Activated T-helper 2 cell treated with anti-CD3 and anti-CD28 coated beads, Interferon-gamma antibody, Interleukin-2, Interleukin-4, amounts not matched to agents 10 μg/mL and 5 μg/mL and 100 μg/mL, durations not matched to agents 14 hours and 24 hours and 36 hours (primary cell): ENCODE measurements at regions of chr5 and their contacts with region 1.

Region 1: GRCh38 chr5:91383027-91383955 is at the start of gene ARRDC3:
- DNase-seq: peak; percentile 96
- H3K4me3 Mint-ChIP-seq: peak within 1 kb of the TSS; percentile 98
- H3K27ac Mint-ChIP-seq: peak within 1 kb of the TSS; percentile 100
- H3K4me1 Mint-ChIP-seq: peaks cover 26% of the 10 kb centered on the region
- H3K27me3 Mint-ChIP-seq: no peaks in the 10 kb centered on the region
- total RNA-seq, gene ARRDC3: 17.6 TPM in 2 replicates

Region 2: DNA sequence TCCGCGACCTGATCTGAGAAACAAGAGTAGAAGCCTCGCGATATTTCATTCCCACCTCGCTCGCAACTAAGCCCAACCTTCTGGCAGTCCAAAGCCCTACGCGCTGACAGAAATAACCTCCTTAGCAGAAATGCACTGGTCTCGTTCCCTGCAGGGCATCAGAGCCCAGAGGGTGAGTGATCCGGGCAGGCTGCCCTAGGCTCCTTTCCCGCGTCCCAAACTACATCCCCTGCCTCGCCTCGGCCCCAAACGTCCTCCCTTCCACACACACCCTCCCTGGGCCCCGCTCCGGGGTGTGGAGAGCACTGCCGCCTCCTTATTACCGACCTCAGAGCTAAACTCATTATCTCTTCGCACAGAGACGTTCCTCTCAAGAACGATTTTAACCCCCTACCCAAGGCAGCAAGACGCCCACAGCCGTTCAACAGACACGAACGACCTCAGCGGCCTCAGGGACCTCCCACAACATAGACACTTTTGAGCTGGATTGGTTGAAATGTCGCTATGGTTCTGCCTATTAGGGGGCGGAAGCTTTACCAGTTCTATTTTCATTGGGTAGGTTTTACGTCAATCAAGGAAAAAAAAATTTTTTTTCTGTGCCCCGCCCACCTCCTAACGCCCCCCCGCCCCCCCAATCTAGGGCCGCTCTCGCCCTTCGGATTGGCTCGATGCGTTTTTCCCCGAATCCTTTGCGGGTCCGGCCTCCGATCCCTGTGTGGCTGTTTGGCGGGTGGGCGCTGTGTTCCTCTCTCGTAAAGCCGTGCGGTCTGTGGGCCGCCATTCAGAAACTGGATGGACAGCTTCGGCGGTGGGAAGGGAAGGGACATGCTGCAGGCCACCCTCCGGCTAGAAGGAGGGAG is 973.7 kb before region 1 on chr5 and contains the start of gene CETN3:
- intact Hi-C with region 1: loop called (anchors 2 kb)
- DNase-seq: peak; percentile 88
- H3K4me3 Mint-ChIP-seq: no peak within 1 kb of the TSS
- H3K27ac Mint-ChIP-seq: no peak within 1 kb of the TSS
- H3K4me1 Mint-ChIP-seq: peaks cover 16% of the 10 kb centered on the region
- H3K27me3 Mint-ChIP-seq: peaks cover 2% of the 10 kb centered on the region
- total RNA-seq, gene CETN3: 44.4 and 49.2 TPM in 2 replicates

Region 3: DNA sequence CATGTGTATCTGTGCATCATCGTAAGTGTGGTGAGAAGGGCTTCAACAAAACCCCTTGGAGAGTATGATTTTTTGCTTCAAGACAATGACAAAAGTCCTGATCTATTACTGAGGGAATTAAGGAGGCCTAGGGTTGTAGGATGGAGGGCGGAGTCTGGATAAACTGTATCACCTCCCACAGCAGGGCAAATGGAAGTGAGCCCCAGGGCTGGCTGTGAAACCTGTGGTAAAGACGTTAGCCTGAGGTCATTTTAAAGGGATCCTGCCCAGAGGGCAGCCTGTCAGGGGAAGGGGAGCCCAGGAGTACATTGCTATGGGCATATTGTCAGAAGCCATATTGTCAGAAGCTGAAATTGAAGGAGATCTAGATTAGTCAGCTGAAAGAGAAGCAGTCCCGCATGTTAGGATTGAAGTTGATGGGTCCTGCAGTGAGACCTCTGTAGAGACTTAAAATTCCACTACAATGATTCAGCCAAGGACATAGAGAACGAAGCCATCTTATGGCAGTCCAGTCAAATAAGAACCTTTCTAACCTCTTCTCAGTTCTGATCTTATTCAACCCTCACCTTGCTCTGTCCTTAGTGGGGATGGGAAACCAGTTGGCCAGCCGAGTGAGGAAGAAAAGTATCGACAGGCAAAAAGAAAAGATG is 797.8 kb before region 1 on chr5:
- intact Hi-C with region 1: no loop called
- DNase-seq: no peak
- H3K4me3 Mint-ChIP-seq: no peak overlapping the region
- H3K27ac Mint-ChIP-seq: no peak overlapping the region
- H3K4me1 Mint-ChIP-seq: peaks cover 3% of the 10 kb centered on the region
- H3K27me3 Mint-ChIP-seq: peaks cover 1% of the 10 kb centered on the region

Region 4: GRCh38 chr5:90940227-90940995 is 442.9 kb before region 1 on chr5:
- intact Hi-C with region 1: loop called (anchors 1 kb)
- DNase-seq: peak; percentile 39
- H3K4me3 Mint-ChIP-seq: no peak overlapping the region
- H3K27ac Mint-ChIP-seq: peak overlapping the region; percentile 82
- H3K4me1 Mint-ChIP-seq: peaks cover 36% of the 10 kb centered on the region
- H3K27me3 Mint-ChIP-seq: no peaks in the 10 kb centered on the region

Region 5: GRCh38 chr5:91101600-91102379 is 281.5 kb before region 1 on chr5:
- intact Hi-C with region 1: loop called (anchors 1 kb)
- DNase-seq: peak; percentile 33
- H3K4me3 Mint-ChIP-seq: no peak overlapping the region
- H3K27ac Mint-ChIP-seq: no peak overlapping the region
- H3K4me1 Mint-ChIP-seq: peaks cover 2% of the 10 kb centered on the region
- H3K27me3 Mint-ChIP-seq: peaks cover 9% of the 10 kb centered on the region

Region 6: DNA sequence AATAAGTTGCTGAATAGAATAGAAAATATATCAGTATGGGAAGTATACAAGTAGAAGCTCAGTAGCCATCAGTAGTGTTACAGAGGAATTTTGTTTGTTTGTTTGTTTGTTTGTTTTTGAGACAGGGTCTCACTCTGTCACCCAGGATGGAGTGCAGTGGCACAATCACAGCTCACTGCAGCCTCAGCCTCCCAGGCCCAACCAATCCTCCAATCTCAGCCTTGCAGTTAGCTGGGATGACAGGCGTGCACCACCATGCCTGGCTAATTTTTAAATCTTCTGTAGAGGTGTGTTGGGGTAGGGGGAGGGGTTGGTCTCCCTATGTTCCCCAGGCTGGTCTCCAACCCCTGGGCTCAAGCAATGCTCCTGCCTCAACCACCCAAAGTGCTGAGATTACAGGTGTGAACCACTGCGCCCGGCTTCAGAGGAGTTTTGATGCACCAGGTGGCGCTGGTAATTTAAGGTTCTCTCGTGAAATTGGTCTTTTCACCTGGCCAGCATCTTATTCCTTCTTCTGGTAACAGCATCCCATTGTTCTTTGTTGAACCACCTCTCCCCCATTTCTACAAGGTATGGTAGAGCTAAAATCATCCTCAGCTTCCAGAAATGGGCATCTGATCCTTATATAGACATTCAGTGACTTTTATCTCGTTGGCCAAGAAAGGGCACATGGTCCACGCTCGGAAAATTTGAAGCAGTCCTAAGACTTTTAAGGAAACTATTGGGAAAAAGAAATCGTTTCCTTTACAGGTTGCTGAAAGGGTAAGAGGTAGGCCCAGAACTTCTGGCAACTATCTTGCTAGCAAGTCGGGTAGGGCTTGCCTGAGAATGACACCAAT is 157.2 kb before region 1 on chr5:
- intact Hi-C with region 1: loop called (anchors 1 kb)
- DNase-seq: peak; percentile 26
- H3K4me3 Mint-ChIP-seq: no peak overlapping the region
- H3K27ac Mint-ChIP-seq: no peak overlapping the region
- H3K4me1 Mint-ChIP-seq: peaks cover 4% of the 10 kb centered on the region
- H3K27me3 Mint-ChIP-seq: peaks cover 18% of the 10 kb centered on the region

Region 7: DNA sequence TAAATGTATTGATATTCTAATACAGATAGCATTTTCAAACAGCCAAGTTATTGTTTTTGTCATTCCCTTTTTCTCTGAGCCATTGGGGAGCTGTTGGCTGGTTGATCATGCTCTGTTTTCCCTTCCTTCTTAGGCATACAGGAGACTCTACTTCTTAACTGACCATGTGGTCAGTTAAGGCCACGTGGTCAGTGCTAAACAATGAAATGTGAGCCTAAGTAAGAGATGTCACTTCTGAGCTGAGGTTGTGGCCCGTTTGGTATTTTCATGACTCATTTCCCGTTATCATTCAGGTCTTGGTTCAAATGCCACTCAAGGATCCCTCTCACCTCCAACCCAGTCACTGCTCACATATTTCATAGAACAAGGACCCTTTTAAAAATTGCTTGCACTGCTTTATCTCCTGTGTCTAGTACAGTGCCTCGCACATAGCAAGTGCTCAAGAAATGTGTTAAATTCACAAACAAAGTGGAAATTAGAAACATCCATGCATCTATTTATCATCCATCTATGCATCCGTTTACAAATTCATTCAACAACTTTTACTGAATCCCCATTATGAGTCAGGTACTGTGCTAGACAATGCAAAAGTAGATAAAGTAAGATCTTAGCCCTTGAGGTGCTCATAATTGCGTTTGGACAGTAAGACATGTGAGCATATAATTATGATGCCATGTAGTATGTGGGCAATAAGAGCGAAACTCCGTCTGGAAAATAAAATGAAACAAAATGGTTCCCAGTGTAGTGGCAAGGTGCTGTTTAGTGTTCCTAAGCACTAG is 50.8 kb before region 1 on chr5:
- intact Hi-C with region 1: loop called (anchors 1 kb)
- DNase-seq: no peak
- H3K4me3 Mint-ChIP-seq: no peak overlapping the region
- H3K27ac Mint-ChIP-seq: peak overlapping the region; percentile 6
- H3K4me1 Mint-ChIP-seq: peaks cover 30% of the 10 kb centered on the region
- H3K27me3 Mint-ChIP-seq: peaks cover 25% of the 10 kb centered on the region